Caco-2 (cell line): ENCODE measurements at regions of chr14 and their contacts with region 1.

Region 1: DNA sequence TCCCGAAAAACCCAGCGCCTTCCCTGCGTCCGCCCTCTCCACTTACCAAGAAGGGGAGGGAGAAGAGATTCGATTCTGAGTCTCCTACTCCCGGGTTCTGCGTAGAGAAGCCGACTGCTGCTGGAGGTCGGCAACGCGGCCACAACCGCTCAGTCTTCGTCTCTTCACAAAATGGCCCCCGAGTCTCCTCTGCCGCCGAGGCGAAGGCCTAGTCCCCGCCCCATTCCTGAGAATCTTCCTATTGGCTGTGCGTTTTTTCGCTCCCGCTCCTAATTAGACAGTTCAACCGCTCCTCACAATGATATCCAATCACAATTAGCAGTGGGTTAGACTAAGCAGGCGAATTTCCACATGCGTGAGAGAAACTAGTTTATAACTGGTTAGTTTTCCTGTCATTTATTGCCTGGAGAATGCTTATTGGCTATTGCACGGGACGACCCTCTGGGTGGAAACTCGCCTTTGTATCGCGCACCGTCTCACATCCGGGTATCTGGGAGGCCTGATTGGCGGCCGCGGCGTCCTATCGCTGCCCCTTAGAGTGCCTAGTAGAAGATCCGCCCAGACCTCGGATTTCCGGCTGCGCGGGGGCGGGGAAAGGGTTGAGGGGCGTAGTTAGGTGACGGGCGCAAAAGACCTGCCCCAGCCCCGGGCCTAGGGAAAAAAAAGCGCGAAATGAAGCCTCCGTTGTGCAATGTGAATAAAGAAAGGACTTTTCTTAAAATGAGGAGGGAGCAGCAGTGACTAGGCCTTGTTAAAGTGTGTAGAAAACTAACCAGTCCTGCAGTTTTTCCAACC is at the start of gene HNRNPC:
- DNase-seq: peak; percentile 100
- H3K4me3 ChIP-seq: peak within 1 kb of the TSS; percentile 53
- H3K4me3 Mint-ChIP-seq: peak within 1 kb of the TSS; percentile 98
- H3K27ac Mint-ChIP-seq: peak within 1 kb of the TSS; percentile 100
- H3K4me1 ChIP-seq: peaks cover 12% of the 10 kb centered on the region
- H3K4me1 Mint-ChIP-seq: peaks cover 14% of the 10 kb centered on the region
- H3K27me3 ChIP-seq: no peaks in the 10 kb centered on the region
- H3K27me3 Mint-ChIP-seq: no peaks in the 10 kb centered on the region
- CTCF ChIP-seq: no peak
- total RNA-seq, gene HNRNPC: 512 and 536 TPM in 2 replicates

Region 2: DNA sequence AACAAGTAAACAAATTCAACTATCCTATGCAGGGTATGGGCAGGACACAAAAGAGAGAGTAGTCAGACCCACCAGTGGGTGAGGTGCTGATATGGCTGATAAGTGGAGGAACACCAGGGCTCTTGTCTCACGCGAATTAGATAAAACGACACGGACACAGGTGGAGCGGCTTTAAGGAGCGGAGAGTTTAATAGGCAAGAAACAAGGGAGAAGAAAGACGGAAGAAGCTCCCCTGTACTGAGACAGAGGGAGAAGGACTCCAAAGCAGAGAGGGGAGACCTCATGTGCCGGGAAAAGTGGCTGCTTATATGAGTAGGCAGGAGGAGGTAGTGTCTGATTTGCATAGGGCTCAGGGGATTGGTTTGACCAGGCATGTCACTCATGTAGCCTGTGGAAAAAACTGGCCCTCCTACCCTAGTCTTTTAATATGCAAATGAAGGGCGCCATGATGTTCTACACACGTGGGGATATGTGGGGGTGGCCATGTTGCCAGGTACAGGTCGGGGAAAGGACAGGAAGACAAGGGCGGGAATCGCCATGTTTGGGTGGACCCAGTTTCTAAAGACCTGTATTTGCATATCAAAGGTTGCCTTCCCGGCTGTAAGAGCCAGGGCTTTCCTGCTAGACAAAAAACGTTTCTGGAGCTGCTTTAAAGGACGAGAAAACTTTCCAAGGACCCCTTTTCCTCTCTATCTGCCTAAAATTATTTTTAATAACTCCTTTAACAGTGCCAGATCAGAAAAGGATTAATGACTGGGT is 39.2 kb after region 1 on chr14:
- CTCF ChIA-PET with region 1: no interaction called
- POLR2A ChIA-PET with region 1: no interaction called
- intact Hi-C with region 1: loop called (anchors 1 kb)
- DNase-seq: peak; percentile 93 to 97
- H3K4me3 ChIP-seq: peak overlapping the region; percentile 36
- H3K4me3 Mint-ChIP-seq: peak overlapping the region; percentile 78
- H3K27ac Mint-ChIP-seq: peak overlapping the region; percentile 89
- H3K4me1 ChIP-seq: peaks cover 21% of the 10 kb centered on the region
- H3K4me1 Mint-ChIP-seq: no peaks in the 10 kb centered on the region
- H3K27me3 ChIP-seq: no peaks in the 10 kb centered on the region
- H3K27me3 Mint-ChIP-seq: no peaks in the 10 kb centered on the region
- CTCF ChIP-seq: no peak

Region 3: GRCh38 chr14:21326972-21327371 is 57.5 kb after region 1 on chr14:
- CTCF ChIA-PET with region 1: no interaction called
- POLR2A ChIA-PET with region 1: no interaction called
- intact Hi-C with region 1: no loop called
- DNase-seq: no peak
- H3K4me3 ChIP-seq: no peak overlapping the region
- H3K4me3 Mint-ChIP-seq: no peak overlapping the region
- H3K27ac Mint-ChIP-seq: no peak overlapping the region
- H3K4me1 ChIP-seq: no peaks in the 10 kb centered on the region
- H3K4me1 Mint-ChIP-seq: no peaks in the 10 kb centered on the region
- H3K27me3 ChIP-seq: no peaks in the 10 kb centered on the region
- H3K27me3 Mint-ChIP-seq: peaks cover 4% of the 10 kb centered on the region
- CTCF ChIP-seq: no peak